ENCODE measurements at regions of chr16 and their contacts with region 1.

Region 1: GRCh38 chr16:30378236-30379204 is 3.8 kb downstream of the SEPTIN1 start:
- DNase-seq: peak; percentile 92
- ATAC-seq: peak; percentile 91
- H3K4me3 ChIP-seq: peak overlapping the region; percentile 64 to 95
- H3K27ac ChIP-seq: peak overlapping the region; percentile 97
- H3K4me1 ChIP-seq: peaks cover 14 to 33% of the 10 kb centered on the region in 2 experiments
- H3K27me3 ChIP-seq: no peaks in the 10 kb centered on the region
- CTCF ChIP-seq: peak in 2 of 3 experiments; percentile 16 to 24; a peak in 3 of 6 replicates
- POLR2A ChIP-seq: peak; percentile 76
- RAD21 ChIP-seq: no peak

Region 2: GRCh38 chr16:30355144-30355894 is 23.2 kb before region 1 on chr16 and contains the start of gene CD2BP2:
- CTCF ChIA-PET with region 1: no interaction called
- POLR2A ChIA-PET with region 1: no interaction called
- RAD21 ChIA-PET with region 1: no interaction called
- intact Hi-C with region 1: no loop called
- DNase-seq: peak; percentile 99
- ATAC-seq: peak; percentile 81
- H3K4me3 ChIP-seq: peak within 1 kb of the TSS; percentile 86 to 92
- H3K27ac ChIP-seq: peak within 1 kb of the TSS; percentile 92
- H3K4me1 ChIP-seq: peaks cover 39 to 54% of the 10 kb centered on the region in 2 experiments
- H3K27me3 ChIP-seq: no peaks in the 10 kb centered on the region
- CTCF ChIP-seq: 0 out of 6 replicates have a peak, but pooled peaks of 1 of the 3 experiments have one; percentile 18
- POLR2A ChIP-seq: no peak
- RAD21 ChIP-seq: no peak; the same call in 1 of the 2 replicates
- total RNA-seq, gene CD2BP2: 51.8 TPM

Region 3: GRCh38 chr16:30395155-30395991 is 16.9 kb after region 1 on chr16 and contains the start of gene ZNF48:
- CTCF ChIA-PET with region 1: no interaction called
- POLR2A ChIA-PET with region 1: interaction called, 3 read pairs
- RAD21 ChIA-PET with region 1: no interaction called
- intact Hi-C with region 1: loop called (anchors 2 kb)
- DNase-seq: peak; percentile 77
- ATAC-seq: peak; percentile 83
- H3K4me3 ChIP-seq: peak within 1 kb of the TSS; percentile 95 to 96
- H3K27ac ChIP-seq: peak within 1 kb of the TSS; percentile 97
- H3K4me1 ChIP-seq: peaks cover 27 to 50% of the 10 kb centered on the region in 2 experiments
- H3K27me3 ChIP-seq: no peaks in the 10 kb centered on the region
- CTCF ChIP-seq: peak in 1 of 3 experiments; percentile 28; a peak in 2 of 6 replicates
- POLR2A ChIP-seq: no peak
- RAD21 ChIP-seq: peak; percentile 33; the same call in 1 of the 2 replicates
- total RNA-seq, gene ZNF48: 17.9 TPM

Region 4: GRCh38 chr16:30417529-30418349 is 39.2 kb after region 1 on chr16:
- CTCF ChIA-PET with region 1: no interaction called
- POLR2A ChIA-PET with region 1: no interaction called
- RAD21 ChIA-PET with region 1: interaction called in 1 of 2 experiments, 13 read pairs
- intact Hi-C with region 1: no loop called
- DNase-seq: peak; percentile 91
- ATAC-seq: peak; percentile 91
- H3K4me3 ChIP-seq: peak overlapping the region; percentile 26 to 44
- H3K27ac ChIP-seq: peak overlapping the region; percentile 83
- H3K4me1 ChIP-seq: peaks cover 6 to 39% of the 10 kb centered on the region in 2 experiments; a peak in 3 of 4 replicates
- H3K27me3 ChIP-seq: no peaks in the 10 kb centered on the region
- CTCF ChIP-seq: peak in 1 of 3 experiments; percentile 35; a peak in 1 of 6 replicates
- POLR2A ChIP-seq: peak; percentile 13
- RAD21 ChIP-seq: no peak